ENCODE measurements at regions of chr3 and their contacts with region 1.

Region 1: GRCh38 chr3:187714404-187714979 is 12.1 kb upstream of the RTP2 start:
- DNase-seq: peak; percentile 88
- H3K4me3 Mint-ChIP-seq: no peak overlapping the region
- H3K27ac Mint-ChIP-seq: no peak overlapping the region
- H3K4me1 Mint-ChIP-seq: peaks cover 9% of the 10 kb centered on the region
- H3K27me3 Mint-ChIP-seq: no peaks in the 10 kb centered on the region

Region 2: GRCh38 chr3:187616307-187616972 is 98.1 kb before region 1 on chr3:
- CTCF ChIA-PET with region 1: interaction called, 14 read pairs
- intact Hi-C with region 1: loop called (anchors 1 kb)
- DNase-seq: peak; percentile 79
- H3K4me3 Mint-ChIP-seq: no peak overlapping the region
- H3K27ac Mint-ChIP-seq: no peak overlapping the region
- H3K4me1 Mint-ChIP-seq: no peaks in the 10 kb centered on the region
- H3K27me3 Mint-ChIP-seq: peaks cover 4% of the 10 kb centered on the region